ENCODE measurements at regions of chr2 and their contacts with region 1.

Region 1: DNA sequence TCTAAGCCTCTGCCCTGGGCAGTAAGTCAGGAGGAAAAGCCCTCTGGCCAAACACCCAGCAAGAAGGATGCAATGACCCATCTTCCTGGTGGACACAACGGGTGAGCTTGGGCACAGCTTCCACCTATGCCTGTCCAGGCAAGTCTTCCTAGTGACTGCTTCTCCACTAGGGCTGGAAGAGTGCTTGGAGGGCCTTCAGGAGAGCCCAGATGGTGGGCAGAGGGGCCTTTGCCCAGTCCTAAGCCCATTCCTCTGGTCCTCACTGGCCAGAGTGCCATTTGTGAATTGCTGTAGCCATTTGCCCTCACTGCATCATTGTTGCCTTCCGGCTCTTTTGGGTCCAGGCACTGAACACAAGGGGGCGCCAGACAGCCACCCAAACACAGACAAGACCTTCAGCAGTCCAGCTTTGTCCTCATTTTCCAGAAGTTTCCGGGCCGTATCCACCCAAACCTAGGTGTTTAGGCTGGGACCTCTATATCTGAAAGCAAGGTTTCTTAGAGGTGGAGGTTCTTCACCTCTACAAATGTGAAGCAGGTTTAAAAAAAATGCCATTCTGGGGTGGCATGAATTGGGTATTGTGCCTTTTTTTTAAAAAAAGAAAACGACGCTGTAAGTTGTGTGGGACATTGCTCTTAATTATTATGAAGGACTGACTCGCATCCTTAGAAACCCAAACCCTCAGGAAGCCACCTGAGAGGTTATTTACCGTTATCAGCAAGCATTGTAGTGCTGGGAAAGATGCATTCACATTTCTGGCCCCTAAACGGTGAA is 29.5 kb downstream of the PAX8 start:
- DNase-seq: peak; percentile 86 to 91
- ATAC-seq: peak; percentile 84
- H3K4me3 ChIP-seq: no peak overlapping the region
- H3K27ac ChIP-seq: no peak overlapping the region
- H3K4me1 ChIP-seq: no peaks in the 10 kb centered on the region
- H3K27me3 ChIP-seq: no peaks in the 10 kb centered on the region

Region 2: GRCh38 chr2:113324684-113325160 is 75.5 kb after region 1 on chr2:
- intact Hi-C with region 1: loop called (anchors 10 kb)
- DNase-seq: peak in 1 of 2 donors; percentile 83
- ATAC-seq: peak; percentile 70
- H3K4me3 ChIP-seq: peak overlapping the region; percentile 49 to 75
- H3K27ac ChIP-seq: no peak overlapping the region
- H3K4me1 ChIP-seq: no peaks in the 10 kb centered on the region
- H3K27me3 ChIP-seq: no peaks in the 10 kb centered on the region

Region 3: GRCh38 chr2:113337809-113338208 is 88.6 kb after region 1 on chr2:
- intact Hi-C with region 1: no loop called
- DNase-seq: no peak
- ATAC-seq: peak; percentile 16
- H3K4me3 ChIP-seq: no peak overlapping the region
- H3K27ac ChIP-seq: no peak overlapping the region
- H3K4me1 ChIP-seq: no peaks in the 10 kb centered on the region
- H3K27me3 ChIP-seq: peaks cover 0 to 1% of the 10 kb centered on the region in 2 donors

Region 4: DNA sequence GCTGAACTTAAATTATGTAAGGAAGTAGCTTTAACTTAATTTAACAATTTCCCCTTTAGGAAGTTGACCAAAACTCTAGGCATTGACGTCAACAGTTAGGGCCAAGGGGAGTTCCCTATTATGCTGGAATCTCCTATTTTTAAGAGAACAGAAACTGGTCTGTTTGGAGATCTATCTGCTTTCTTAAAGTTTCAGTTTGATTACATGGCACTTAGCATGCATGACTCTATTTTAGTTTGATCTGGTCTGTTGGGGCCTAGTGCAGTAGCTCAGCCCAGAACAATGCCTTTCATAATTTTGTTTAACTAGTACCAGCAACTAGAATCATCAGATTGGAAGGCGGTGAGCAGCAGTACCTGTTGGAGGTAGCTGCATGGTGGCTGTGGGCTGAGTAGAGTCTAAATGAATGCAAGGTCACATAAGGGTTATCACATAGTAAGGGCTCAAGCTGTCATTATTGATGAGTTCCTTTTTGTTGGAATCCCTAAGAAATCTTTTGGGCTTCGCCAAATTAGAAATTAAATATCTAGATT is 127.8 kb after region 1 on chr2:
- intact Hi-C with region 1: no loop called
- DNase-seq: no peak
- ATAC-seq: no peak
- H3K4me3 ChIP-seq: no peak overlapping the region
- H3K27ac ChIP-seq: no peak overlapping the region
- H3K4me1 ChIP-seq: no peaks in the 10 kb centered on the region
- H3K27me3 ChIP-seq: peaks cover 0 to 2% of the 10 kb centered on the region in 2 donors